Natural killer cell (primary cell): ENCODE measurements at regions of chr9 and their contacts with region 1.

Region 1: GRCh38 chr9:78213712-78214111 is 22.2 kb upstream of the CEP78 start:
- DNase-seq: peak in 1 of 2 donors; percentile 67
- ATAC-seq: peak; percentile 46 to 68 (median 66)
- H3K4me3 ChIP-seq: no peak overlapping the region
- H3K4me3 Mint-ChIP-seq: no peak overlapping the region
- H3K27ac ChIP-seq: no peak overlapping the region
- H3K27ac Mint-ChIP-seq: peak overlapping the region in 1 of 2 donors; percentile 49
- H3K4me1 ChIP-seq: peaks cover 26% of the 10 kb centered on the region
- H3K4me1 Mint-ChIP-seq: peaks cover 42 to 45% of the 10 kb centered on the region in 2 donors
- H3K27me3 ChIP-seq: no peaks in the 10 kb centered on the region
- H3K27me3 Mint-ChIP-seq: peaks cover 0 to 1% of the 10 kb centered on the region in 2 donors
- CTCF ChIP-seq: peak; percentile 47

Region 2: GRCh38 chr9:77032326-77032725 is 1181.4 kb before region 1 on chr9:
- intact Hi-C with region 1: no loop called
- DNase-seq: no peak
- ATAC-seq: no peak
- H3K4me3 ChIP-seq: no peak overlapping the region
- H3K4me3 Mint-ChIP-seq: no peak overlapping the region
- H3K27ac ChIP-seq: no peak overlapping the region
- H3K27ac Mint-ChIP-seq: no peak overlapping the region
- H3K4me1 ChIP-seq: no peaks in the 10 kb centered on the region
- H3K4me1 Mint-ChIP-seq: no peaks in the 10 kb centered on the region
- H3K27me3 ChIP-seq: peaks cover 2% of the 10 kb centered on the region
- H3K27me3 Mint-ChIP-seq: peaks cover 9 to 10% of the 10 kb centered on the region in 2 donors
- CTCF ChIP-seq: no peak

Region 3: GRCh38 chr9:77839459-77840140 is 374.1 kb before region 1 on chr9:
- intact Hi-C with region 1: loop called (anchors 10 kb)
- DNase-seq: no peak
- ATAC-seq: no peak
- H3K4me3 ChIP-seq: no peak overlapping the region
- H3K4me3 Mint-ChIP-seq: no peak overlapping the region
- H3K27ac ChIP-seq: no peak overlapping the region
- H3K27ac Mint-ChIP-seq: no peak overlapping the region
- H3K4me1 ChIP-seq: no peaks in the 10 kb centered on the region
- H3K4me1 Mint-ChIP-seq: no peaks in the 10 kb centered on the region
- H3K27me3 ChIP-seq: no peaks in the 10 kb centered on the region
- H3K27me3 Mint-ChIP-seq: no peaks in the 10 kb centered on the region
- CTCF ChIP-seq: no peak

Region 4: DNA sequence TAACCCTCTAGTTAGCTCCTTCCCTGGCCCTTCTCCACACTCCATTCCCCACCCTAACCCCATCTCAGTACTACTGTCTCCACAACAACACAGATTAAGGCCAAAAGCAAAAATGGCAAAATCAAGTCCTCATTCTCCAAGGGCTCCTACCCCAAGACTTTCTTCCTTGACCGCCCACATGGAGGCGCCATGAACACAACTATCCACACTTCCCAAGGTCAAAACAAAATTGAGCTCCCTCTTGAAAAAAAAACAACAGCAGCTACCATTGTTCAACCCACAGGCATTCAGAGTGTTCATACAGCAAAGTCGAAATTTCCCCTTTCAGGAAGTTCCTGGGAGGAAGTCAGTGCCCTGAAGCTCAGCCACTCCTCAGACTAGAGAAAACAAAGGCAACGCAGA is 236.5 kb before region 1 on chr9:
- intact Hi-C with region 1: loop called (anchors 1 kb)
- DNase-seq: peak; percentile 24 to 73
- ATAC-seq: peak; percentile 34 to 67 (median 59)
- H3K4me3 ChIP-seq: no peak overlapping the region
- H3K4me3 Mint-ChIP-seq: no peak overlapping the region
- H3K27ac ChIP-seq: no peak overlapping the region
- H3K27ac Mint-ChIP-seq: peak overlapping the region; percentile 65 to 70
- H3K4me1 ChIP-seq: peaks cover 20% of the 10 kb centered on the region
- H3K4me1 Mint-ChIP-seq: peaks cover 35 to 37% of the 10 kb centered on the region in 2 donors
- H3K27me3 ChIP-seq: no peaks in the 10 kb centered on the region
- H3K27me3 Mint-ChIP-seq: no peaks in the 10 kb centered on the region
- CTCF ChIP-seq: peak; percentile 22

Region 5: DNA sequence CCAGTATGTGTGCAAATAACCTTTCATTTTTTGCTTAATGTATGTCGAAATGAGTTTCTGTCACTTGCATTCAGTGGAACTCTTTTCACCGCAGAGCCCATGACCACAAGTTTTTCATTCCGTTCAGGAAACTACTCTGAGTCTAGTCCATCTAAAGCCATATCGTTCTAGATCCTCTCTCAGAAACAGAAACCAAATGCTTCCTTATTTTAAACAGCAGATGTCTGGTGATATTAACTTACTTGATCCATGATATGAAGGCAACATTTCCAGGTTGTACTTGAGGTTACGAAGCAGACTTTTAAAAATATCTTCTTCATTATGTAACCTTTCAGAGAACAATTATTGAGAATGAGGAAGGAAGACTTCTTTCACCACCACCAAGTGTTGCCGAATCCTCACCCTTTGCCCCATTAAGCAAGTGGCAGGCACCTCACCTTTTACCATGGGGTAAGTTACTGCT is 109.7 kb before region 1 on chr9:
- intact Hi-C with region 1: loop called (anchors 10 kb)
- DNase-seq: peak; percentile 19 to 26
- ATAC-seq: peak; percentile 61 to 88 (median 62)
- H3K4me3 ChIP-seq: no peak overlapping the region
- H3K4me3 Mint-ChIP-seq: peak overlapping the region; percentile 83
- H3K27ac ChIP-seq: peak overlapping the region; percentile 37
- H3K27ac Mint-ChIP-seq: peak overlapping the region; percentile 56 to 79
- H3K4me1 ChIP-seq: peaks cover 20% of the 10 kb centered on the region
- H3K4me1 Mint-ChIP-seq: peaks cover 41 to 58% of the 10 kb centered on the region in 2 donors
- H3K27me3 ChIP-seq: no peaks in the 10 kb centered on the region
- H3K27me3 Mint-ChIP-seq: no peaks in the 10 kb centered on the region
- CTCF ChIP-seq: no peak

Region 6: GRCh38 chr9:78235756-78236538 is 22.2 kb after region 1 on chr9 and contains the start of gene CEP78:
- intact Hi-C with region 1: loop called (anchors 1 kb)
- DNase-seq: peak; percentile 82 to 95
- ATAC-seq: peak; percentile 78 to 90 (median 81)
- H3K4me3 ChIP-seq: peak within 1 kb of the TSS; percentile 96
- H3K4me3 Mint-ChIP-seq: peak within 1 kb of the TSS; percentile 91
- H3K27ac ChIP-seq: peak within 1 kb of the TSS; percentile 88
- H3K27ac Mint-ChIP-seq: peak within 1 kb of the TSS in 1 of 2 donors; percentile 98
- H3K4me1 ChIP-seq: peaks cover 44% of the 10 kb centered on the region
- H3K4me1 Mint-ChIP-seq: peaks cover 44 to 48% of the 10 kb centered on the region in 2 donors
- H3K27me3 ChIP-seq: no peaks in the 10 kb centered on the region
- H3K27me3 Mint-ChIP-seq: no peaks in the 10 kb centered on the region
- CTCF ChIP-seq: no peak
- total RNA-seq, gene CEP78: 204 to 304 (median 253) TPM